B cell (primary cell): ENCODE measurements at regions of chr12 and their contacts with region 1.

Region 1: DNA sequence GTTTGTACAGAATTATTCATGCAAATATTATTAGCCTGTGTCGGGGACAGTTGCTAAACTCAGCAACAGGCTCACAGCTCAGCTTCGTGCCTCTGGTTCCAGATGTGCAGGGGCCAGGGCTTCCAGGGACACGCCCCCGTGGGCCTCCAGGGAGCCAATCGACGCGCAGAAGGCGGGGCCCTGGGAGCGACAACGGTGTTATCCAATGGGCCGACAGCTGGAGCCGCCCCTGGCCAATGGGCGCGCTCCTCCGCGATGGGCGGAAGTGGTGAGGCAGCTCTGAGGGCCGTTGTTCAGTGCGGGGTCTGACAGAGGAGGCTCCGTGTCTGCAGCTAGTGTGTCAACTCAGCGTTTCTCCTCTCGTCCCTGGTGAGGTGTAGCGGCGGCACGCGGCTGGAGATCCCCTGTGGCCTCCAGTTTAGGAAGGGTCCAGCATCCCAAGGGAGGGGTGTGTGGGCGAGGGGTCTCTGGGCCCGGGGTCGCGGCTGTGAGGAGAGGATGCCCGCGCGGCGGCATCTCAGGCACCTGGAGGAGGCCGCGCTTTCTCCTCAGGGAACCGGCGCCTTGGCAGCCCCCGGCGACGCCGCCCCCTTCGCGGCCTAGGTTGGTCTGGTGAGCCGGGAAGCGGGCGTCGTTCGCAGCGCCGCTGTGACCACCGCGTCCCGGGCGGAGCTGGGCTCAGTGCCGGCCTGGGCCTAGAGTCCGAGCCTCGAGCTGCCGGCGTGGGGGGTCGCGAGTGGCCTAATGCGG is at the start of gene TRAFD1:
- DNase-seq: peak; percentile 98
- ATAC-seq: peak; percentile 98
- H3K4me3 ChIP-seq: peak within 1 kb of the TSS; percentile 64 to 88 (median 86)
- H3K4me3 Mint-ChIP-seq: peak within 1 kb of the TSS; percentile 76
- H3K27ac ChIP-seq: peak within 1 kb of the TSS; percentile 62 to 86
- H3K27ac Mint-ChIP-seq: peak within 1 kb of the TSS; percentile 89
- H3K4me1 ChIP-seq: peaks cover 40 to 47% of the 10 kb centered on the region in 2 donors
- H3K4me1 Mint-ChIP-seq: peaks cover 43% of the 10 kb centered on the region
- H3K27me3 ChIP-seq: no peaks in the 10 kb centered on the region
- H3K27me3 Mint-ChIP-seq: peaks cover 4% of the 10 kb centered on the region
- CTCF ChIP-seq: no peak
- total RNA-seq, gene TRAFD1: 37.2 and 37.7 TPM in 2 replicates

Region 2: GRCh38 chr12:112061137-112061536 is 64.3 kb before region 1 on chr12:
- CTCF ChIA-PET with region 1: no interaction called
- POLR2A ChIA-PET with region 1: no interaction called
- intact Hi-C with region 1: no loop called
- DNase-seq: no peak
- ATAC-seq: no peak
- H3K4me3 ChIP-seq: no peak overlapping the region
- H3K4me3 Mint-ChIP-seq: no peak overlapping the region
- H3K27ac ChIP-seq: no peak overlapping the region
- H3K27ac Mint-ChIP-seq: no peak overlapping the region
- H3K4me1 ChIP-seq: no peaks in the 10 kb centered on the region
- H3K4me1 Mint-ChIP-seq: no peaks in the 10 kb centered on the region
- H3K27me3 ChIP-seq: no peaks in the 10 kb centered on the region
- H3K27me3 Mint-ChIP-seq: no peaks in the 10 kb centered on the region
- CTCF ChIP-seq: no peak

Region 3: GRCh38 chr12:112108201-112109079 is 17.0 kb before region 1 on chr12 and contains the start of gene NAA25:
- CTCF ChIA-PET with region 1: interaction called, 10 read pairs
- POLR2A ChIA-PET with region 1: interaction called, 35 read pairs
- intact Hi-C with region 1: loop called (anchors 1 kb)
- DNase-seq: peak; percentile 91
- ATAC-seq: peak; percentile 72
- H3K4me3 ChIP-seq: peak within 1 kb of the TSS; percentile 84 to 100 (median 97)
- H3K4me3 Mint-ChIP-seq: peak within 1 kb of the TSS; percentile 99
- H3K27ac ChIP-seq: peak within 1 kb of the TSS; percentile 81 to 88
- H3K27ac Mint-ChIP-seq: peak within 1 kb of the TSS; percentile 99
- H3K4me1 ChIP-seq: peaks cover 25 to 29% of the 10 kb centered on the region in 2 donors
- H3K4me1 Mint-ChIP-seq: peaks cover 39% of the 10 kb centered on the region
- H3K27me3 ChIP-seq: no peaks in the 10 kb centered on the region
- H3K27me3 Mint-ChIP-seq: no peaks in the 10 kb centered on the region
- CTCF ChIP-seq: no peak
- total RNA-seq, gene NAA25: 36.5 and 40.8 TPM in 2 replicates

Region 4: GRCh38 chr12:112362310-112362709 is 236.9 kb after region 1 on chr12:
- CTCF ChIA-PET with region 1: no interaction called
- POLR2A ChIA-PET with region 1: no interaction called
- intact Hi-C with region 1: no loop called
- DNase-seq: no peak
- ATAC-seq: no peak
- H3K4me3 ChIP-seq: no peak overlapping the region
- H3K4me3 Mint-ChIP-seq: no peak overlapping the region
- H3K27ac ChIP-seq: no peak overlapping the region
- H3K27ac Mint-ChIP-seq: no peak overlapping the region
- H3K4me1 ChIP-seq: peaks cover under 1 to 6% of the 10 kb centered on the region in 2 donors
- H3K4me1 Mint-ChIP-seq: peaks cover 23% of the 10 kb centered on the region
- H3K27me3 ChIP-seq: no peaks in the 10 kb centered on the region
- H3K27me3 Mint-ChIP-seq: no peaks in the 10 kb centered on the region
- CTCF ChIP-seq: no peak

Region 5: GRCh38 chr12:112409064-112409905 is 283.9 kb after region 1 on chr12 and contains the start of gene RPL6:
- CTCF ChIA-PET with region 1: no interaction called
- POLR2A ChIA-PET with region 1: no interaction called
- intact Hi-C with region 1: loop called (anchors 1 kb)
- DNase-seq: peak; percentile 91
- ATAC-seq: peak; percentile 90
- H3K4me3 ChIP-seq: peak within 1 kb of the TSS; percentile 68 to 97 (median 96)
- H3K4me3 Mint-ChIP-seq: peak within 1 kb of the TSS; percentile 100
- H3K27ac ChIP-seq: peak within 1 kb of the TSS; percentile 83 to 91
- H3K27ac Mint-ChIP-seq: peak within 1 kb of the TSS; percentile 100
- H3K4me1 ChIP-seq: peaks cover 15 to 24% of the 10 kb centered on the region in 2 donors
- H3K4me1 Mint-ChIP-seq: peaks cover 28% of the 10 kb centered on the region
- H3K27me3 ChIP-seq: no peaks in the 10 kb centered on the region
- H3K27me3 Mint-ChIP-seq: no peaks in the 10 kb centered on the region
- CTCF ChIP-seq: no peak
- total RNA-seq, gene RPL6: 1,537 and 1,621 TPM in 2 replicates

Region 6: GRCh38 chr12:112418608-112419298 is 293.3 kb after region 1 on chr12 and contains the start of gene PTPN11:
- CTCF ChIA-PET with region 1: no interaction called
- POLR2A ChIA-PET with region 1: no interaction called
- intact Hi-C with region 1: loop called (anchors 1 kb)
- DNase-seq: peak; percentile 95
- ATAC-seq: peak; percentile 84
- H3K4me3 ChIP-seq: peak within 1 kb of the TSS; percentile 77 to 97 (median 95)
- H3K4me3 Mint-ChIP-seq: peak within 1 kb of the TSS; percentile 97
- H3K27ac ChIP-seq: peak within 1 kb of the TSS; percentile 86 to 89
- H3K27ac Mint-ChIP-seq: peak within 1 kb of the TSS; percentile 95
- H3K4me1 ChIP-seq: peaks cover 13 to 18% of the 10 kb centered on the region in 2 donors
- H3K4me1 Mint-ChIP-seq: peaks cover 32% of the 10 kb centered on the region
- H3K27me3 ChIP-seq: no peaks in the 10 kb centered on the region
- H3K27me3 Mint-ChIP-seq: no peaks in the 10 kb centered on the region
- CTCF ChIP-seq: peak; percentile 71
- total RNA-seq, gene PTPN11: 49.8 and 53.1 TPM in 2 replicates